CD4-positive, alpha-beta memory T cell (primary cell): ENCODE measurements at regions of chr1 and their contacts with region 1.

Region 1: GRCh38 chr1:244451951-244452795 is 464 bp upstream of the ADSS2 start:
- DNase-seq: peak; percentile 98 to 99 (median 99)
- H3K4me3 ChIP-seq: peak overlapping the region in 1 of 2 donors; percentile 95
- H3K4me3 Mint-ChIP-seq: peak overlapping the region; percentile 87 to 97 (median 92)
- H3K27ac ChIP-seq: peak overlapping the region; percentile 94
- H3K27ac Mint-ChIP-seq: peak overlapping the region; percentile 87 to 100 (median 95)
- H3K4me1 ChIP-seq: peaks cover 39% of the 10 kb centered on the region
- H3K4me1 Mint-ChIP-seq: peaks cover 31 to 48% (median 35%) of the 10 kb centered on the region in 4 donors
- H3K27me3 ChIP-seq: no peaks in the 10 kb centered on the region
- H3K27me3 Mint-ChIP-seq: no peaks in the 10 kb centered on the region

Region 2: GRCh38 chr1:244302889-244303613 is 149.1 kb before region 1 on chr1:
- CTCF ChIA-PET with region 1: interaction called, 6 read pairs
- POLR2A ChIA-PET with region 1: no interaction called
- intact Hi-C with region 1: loop called (anchors 1 kb)
- DNase-seq: no peak
- H3K4me3 ChIP-seq: no peak overlapping the region
- H3K4me3 Mint-ChIP-seq: no peak overlapping the region
- H3K27ac ChIP-seq: no peak overlapping the region
- H3K27ac Mint-ChIP-seq: no peak overlapping the region
- H3K4me1 ChIP-seq: peaks cover 10% of the 10 kb centered on the region
- H3K4me1 Mint-ChIP-seq: peaks cover 6 to 14% (median 8%) of the 10 kb centered on the region in 4 donors
- H3K27me3 ChIP-seq: no peaks in the 10 kb centered on the region
- H3K27me3 Mint-ChIP-seq: no peaks in the 10 kb centered on the region

Region 3: DNA sequence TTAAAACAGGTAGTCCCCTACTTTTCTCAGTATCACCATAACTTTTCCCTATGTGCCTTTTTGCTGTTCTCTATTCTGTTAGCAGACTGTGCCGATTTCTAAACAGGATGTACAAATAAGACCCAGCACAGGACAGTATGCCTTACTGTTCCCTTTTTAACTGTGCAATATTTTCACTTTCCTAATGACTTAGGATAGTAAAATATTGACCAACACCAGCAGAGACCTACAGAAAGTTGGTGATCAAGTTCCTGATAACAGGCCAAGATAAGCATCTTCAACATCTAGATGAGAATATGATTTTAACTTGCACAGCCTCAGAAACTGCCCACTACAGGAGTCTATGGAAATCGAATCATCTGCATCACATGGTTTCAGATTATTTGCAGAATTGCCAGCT is 42.5 kb before region 1 on chr1:
- CTCF ChIA-PET with region 1: no interaction called
- POLR2A ChIA-PET with region 1: no interaction called
- intact Hi-C with region 1: no loop called
- DNase-seq: no peak
- H3K4me3 ChIP-seq: no peak overlapping the region
- H3K4me3 Mint-ChIP-seq: no peak overlapping the region
- H3K27ac ChIP-seq: no peak overlapping the region
- H3K27ac Mint-ChIP-seq: peak overlapping the region in 1 of 7 donors; percentile 83
- H3K4me1 ChIP-seq: no peaks in the 10 kb centered on the region
- H3K4me1 Mint-ChIP-seq: peaks cover 0 to 7% (median 6%) of the 10 kb centered on the region in 4 donors
- H3K27me3 ChIP-seq: no peaks in the 10 kb centered on the region
- H3K27me3 Mint-ChIP-seq: no peaks in the 10 kb centered on the region

Region 4: GRCh38 chr1:244599937-244600350 is 147.8 kb after region 1 on chr1:
- CTCF ChIA-PET with region 1: no interaction called
- POLR2A ChIA-PET with region 1: no interaction called
- intact Hi-C with region 1: loop called (anchors 2 kb)
- DNase-seq: peak; percentile 18 to 72 (median 33)
- H3K4me3 ChIP-seq: no peak overlapping the region
- H3K4me3 Mint-ChIP-seq: peak overlapping the region in 6 of 8 donors; percentile 28 to 78 (median 58)
- H3K27ac ChIP-seq: no peak overlapping the region
- H3K27ac Mint-ChIP-seq: peak overlapping the region; percentile 78 to 94 (median 86)
- H3K4me1 ChIP-seq: peaks cover 3% of the 10 kb centered on the region
- H3K4me1 Mint-ChIP-seq: peaks cover 3 to 11% (median 10%) of the 10 kb centered on the region in 4 donors
- H3K27me3 ChIP-seq: no peaks in the 10 kb centered on the region
- H3K27me3 Mint-ChIP-seq: peaks cover 1 to 2% of the 10 kb centered on the region in 2 donors